ENCODE measurements at regions of chr18 and their contacts with region 1.

Region 1: DNA sequence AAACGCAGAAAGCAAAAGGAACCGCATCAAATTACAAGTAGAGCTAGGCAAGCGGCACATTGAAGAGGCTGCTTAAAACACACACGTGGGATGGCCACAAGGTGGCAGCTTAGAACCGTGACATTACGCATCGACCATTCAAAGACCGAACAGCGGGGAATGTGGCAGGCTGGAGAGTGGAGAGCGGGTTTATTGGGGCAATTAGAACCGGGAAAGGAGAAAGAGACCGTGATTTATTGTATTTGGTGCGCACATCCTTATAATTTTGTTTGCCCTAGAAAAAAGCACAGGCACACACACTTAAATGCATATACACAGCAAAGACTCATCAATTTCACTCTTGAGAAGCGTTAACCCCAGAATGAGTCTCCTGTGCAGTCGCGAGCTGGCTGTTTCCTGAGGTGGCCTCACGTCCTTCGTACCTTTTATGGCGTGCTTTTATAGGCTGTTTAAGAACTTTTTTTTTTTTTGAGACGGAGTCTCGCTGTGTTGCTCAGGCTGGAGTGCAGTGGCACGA is 31.7 kb upstream of the MEP1B start:
- H3K4me3 ChIP-seq: peak overlapping the region; percentile 14
- H3K27ac ChIP-seq: no peak overlapping the region
- H3K4me1 ChIP-seq: no peaks in the 10 kb centered on the region
- CTCF ChIP-seq: peak; percentile 88

Region 2: GRCh38 chr18:32271672-32272208 is 113.6 kb after region 1 on chr18:
- CTCF ChIA-PET with region 1: interaction called, 15 read pairs
- POLR2A ChIA-PET with region 1: interaction called, 3 read pairs
- H3K4me3 ChIP-seq: no peak overlapping the region
- H3K27ac ChIP-seq: no peak overlapping the region
- H3K4me1 ChIP-seq: no peaks in the 10 kb centered on the region
- CTCF ChIP-seq: peak; percentile 34

Region 3: GRCh38 chr18:32542221-32542798 is 384.1 kb after region 1 on chr18:
- CTCF ChIA-PET with region 1: interaction called, 10 read pairs
- POLR2A ChIA-PET with region 1: no interaction called
- H3K4me3 ChIP-seq: no peak overlapping the region
- H3K27ac ChIP-seq: no peak overlapping the region
- H3K4me1 ChIP-seq: no peaks in the 10 kb centered on the region
- CTCF ChIP-seq: no peak

Measured in HEK293 (cell line).